ENCODE measurements at regions of chr5 and their contacts with region 1.

Region 1: DNA sequence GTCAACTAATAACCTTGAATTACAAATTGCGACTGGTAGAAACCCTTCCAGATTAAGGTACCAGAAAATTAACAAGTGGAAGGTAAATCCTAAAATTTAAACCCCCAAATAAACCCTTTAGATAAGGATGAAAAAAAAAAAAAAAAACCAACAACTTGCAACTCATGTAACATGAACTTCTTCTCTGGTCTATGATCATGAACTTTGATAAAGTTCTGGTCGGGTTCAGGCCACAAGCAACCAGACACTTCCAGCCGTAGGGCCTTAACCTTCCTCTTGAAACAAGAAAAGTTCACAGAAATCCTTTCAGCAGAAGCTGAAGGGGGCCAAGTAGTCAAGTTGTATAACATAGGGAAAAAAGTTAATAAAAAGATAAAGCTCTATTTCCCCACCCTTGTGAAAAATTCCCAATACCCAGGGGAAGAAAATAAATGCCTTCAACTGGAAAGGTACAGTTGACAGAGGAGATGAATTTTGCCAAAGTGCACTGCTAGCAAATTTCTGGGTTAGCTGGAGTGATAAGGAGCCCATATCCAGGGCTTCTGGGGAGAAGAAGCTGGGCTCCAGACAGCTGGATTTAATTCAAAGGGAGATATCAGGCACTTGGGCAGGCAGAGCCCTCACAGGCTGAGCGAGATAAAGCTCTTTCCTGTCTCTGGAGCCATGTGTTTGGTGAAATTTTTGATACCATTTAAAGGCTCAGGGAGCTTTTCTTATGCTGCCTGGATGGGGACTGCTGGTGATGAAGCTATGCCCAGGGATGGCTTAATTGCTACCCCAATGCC is 234.2 kb upstream of the PANK3 start:
- DNase-seq: no peak

Region 2: GRCh38 chr5:168637793-168638192 is 175.6 kb before region 1 on chr5:
- intact Hi-C with region 1: no loop called
- DNase-seq: no peak

Region 3: GRCh38 chr5:168843277-168844015 is 30.1 kb after region 1 on chr5:
- intact Hi-C with region 1: loop called (anchors 2 kb)
- DNase-seq: no peak

Measured in cardiac septum (tissue), 1 donor.